ENCODE measurements at regions of chr19 and their contacts with region 1.

Region 1: DNA sequence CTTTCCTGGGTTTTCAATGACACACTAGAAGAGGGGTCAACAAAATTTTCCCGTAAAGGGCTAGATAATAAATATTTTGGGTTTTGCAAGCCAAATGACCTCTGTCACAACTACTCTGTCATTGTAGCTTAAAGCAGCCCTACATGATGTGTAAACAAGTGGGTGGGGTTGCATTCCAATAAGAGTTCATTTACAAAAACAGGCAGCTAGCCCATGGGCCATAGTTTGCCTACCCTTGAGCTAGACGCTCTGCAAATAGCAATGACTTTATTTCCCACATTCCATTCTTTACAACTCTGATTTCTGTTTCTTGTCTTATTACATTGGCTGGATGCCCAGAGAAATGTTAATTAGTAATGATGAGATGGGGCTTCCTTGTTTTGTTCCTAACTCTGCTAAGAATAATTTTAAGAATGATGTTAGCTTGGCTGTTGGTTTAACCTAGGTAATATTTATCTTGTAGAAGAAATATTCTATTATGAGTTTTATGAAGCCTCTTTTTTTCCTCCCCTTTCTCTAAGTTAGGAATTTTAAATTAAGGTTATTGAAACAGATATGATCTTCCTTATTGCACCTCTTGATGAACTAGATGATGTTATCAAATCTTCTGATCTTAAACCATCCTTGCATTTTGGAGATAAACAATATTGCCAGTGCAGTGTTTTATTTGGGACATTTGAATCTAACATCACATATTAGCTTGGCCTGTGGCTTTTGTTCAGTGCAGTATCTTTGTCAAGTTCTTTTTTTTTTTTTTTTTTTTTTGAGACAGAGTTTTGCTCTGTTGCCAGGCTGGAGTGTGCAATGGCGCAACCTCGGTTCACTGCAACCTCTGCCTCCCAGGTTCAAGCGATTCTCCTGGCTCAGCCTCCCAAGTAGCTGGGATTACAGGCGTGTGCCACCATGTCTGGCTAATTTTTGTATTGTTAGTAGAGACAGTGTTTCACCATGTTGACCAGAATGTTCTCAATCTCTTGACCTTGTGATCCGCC is 76.3 kb downstream of the ZNF557 start:
- DNase-seq: no peak
- ATAC-seq: peak in 1 of 4 donors; percentile 23
- H3K4me3 ChIP-seq: no peak overlapping the region
- H3K27ac ChIP-seq: peak overlapping the region in 2 of 12 donors; percentile 2 to 30
- H3K4me1 ChIP-seq: peaks cover 0 to 4% (median 0%) of the 10 kb centered on the region in 12 donors
- H3K27me3 ChIP-seq: no peaks in the 10 kb centered on the region
- CTCF ChIP-seq: no peak
- POLR2A ChIP-seq: no peak

Region 2: DNA sequence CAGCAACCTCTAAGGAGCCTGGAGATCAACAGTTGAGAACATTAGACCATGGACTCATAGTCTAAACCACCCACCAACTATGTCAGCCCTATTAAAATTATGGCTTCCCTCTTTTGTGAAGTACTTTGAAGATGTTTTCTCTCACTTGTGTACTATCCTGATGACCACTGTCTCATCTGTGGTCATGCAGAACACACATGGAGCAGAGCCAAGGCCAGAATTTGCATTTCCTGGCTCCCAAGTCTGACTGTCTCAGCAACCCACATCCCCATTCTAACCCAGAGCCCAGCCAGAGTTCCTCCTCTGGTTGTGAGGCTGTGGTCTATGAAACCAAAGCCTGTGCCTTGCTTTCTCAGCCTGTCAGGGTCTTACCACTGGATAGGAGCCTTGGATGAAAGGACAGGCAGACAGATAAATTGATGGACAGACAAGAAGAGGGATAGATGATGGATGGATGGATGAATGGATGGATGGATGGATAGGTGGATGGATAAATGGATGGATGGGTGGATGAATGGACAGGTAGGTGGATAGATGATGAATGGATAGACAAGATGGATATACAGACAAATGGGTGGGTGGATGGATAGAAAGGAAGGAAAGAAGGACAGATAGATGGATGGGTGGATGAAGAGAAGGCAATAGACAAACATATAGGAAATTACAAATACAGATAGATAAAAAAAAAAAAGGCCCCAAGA is 40.9 kb before region 1 on chr19:
- intact Hi-C with region 1: loop called in 1 of 10 experiments (anchors 5 kb)
- DNase-seq: no peak
- ATAC-seq: peak in 2 of 4 donors; percentile 16 to 24
- H3K4me3 ChIP-seq: no peak overlapping the region
- H3K27ac ChIP-seq: no peak overlapping the region
- H3K4me1 ChIP-seq: peaks cover 0 to 5% (median 0%) of the 10 kb centered on the region in 12 donors
- H3K27me3 ChIP-seq: peaks cover 0 to 4% (median 0%) of the 10 kb centered on the region in 9 donors
- CTCF ChIP-seq: no peak
- POLR2A ChIP-seq: no peak